Left ventricle myocardium inferior (tissue), 1 donor: ENCODE measurements at regions of chr22 and their contacts with region 1.

Region 1: DNA sequence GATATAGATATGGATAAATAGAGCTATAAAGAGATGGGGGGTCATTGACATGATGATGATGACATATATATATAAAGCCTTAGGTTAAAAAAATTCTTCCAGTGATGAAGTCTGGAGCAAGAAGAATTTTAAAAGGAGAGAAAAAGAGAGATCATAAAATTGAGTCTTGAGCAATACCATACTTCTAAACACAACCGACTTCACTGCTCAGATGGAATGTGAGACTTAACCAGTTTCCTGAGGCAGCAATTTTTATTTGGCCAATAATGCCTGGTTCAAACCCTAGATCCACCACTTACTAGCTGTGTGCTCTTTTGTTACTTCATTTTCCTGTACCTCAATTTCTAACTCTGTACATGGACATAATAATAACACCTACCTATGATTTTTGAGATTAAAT is 229.5 kb downstream of the TTC28 start:
- DNase-seq: no peak
- H3K4me3 ChIP-seq: no peak overlapping the region
- H3K27ac ChIP-seq: no peak overlapping the region
- H3K4me1 ChIP-seq: no peaks in the 10 kb centered on the region
- H3K27me3 ChIP-seq: no peaks in the 10 kb centered on the region
- CTCF ChIP-seq: no peak

Region 2: DNA sequence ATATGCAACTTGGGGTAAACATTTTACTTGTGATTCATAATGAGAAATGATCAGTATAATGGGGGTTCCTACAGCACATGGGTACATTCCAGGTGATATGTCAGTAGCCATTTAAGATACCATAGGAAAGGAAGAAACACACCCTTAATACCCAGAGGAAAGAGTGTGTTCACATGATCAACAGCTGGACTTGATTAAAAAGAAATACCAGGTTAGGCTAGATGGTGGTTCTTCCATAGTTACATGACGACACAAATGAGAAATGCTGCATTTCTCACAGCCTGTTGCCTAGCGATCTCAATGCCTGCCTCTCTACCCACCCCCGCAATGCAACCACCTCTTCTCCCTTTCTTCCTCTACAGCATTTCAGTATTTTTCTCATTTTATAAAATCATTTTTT is 132.7 kb after region 1 on chr22:
- intact Hi-C with region 1: loop called (anchors 10 kb)
- DNase-seq: no peak
- H3K4me3 ChIP-seq: no peak overlapping the region
- H3K27ac ChIP-seq: no peak overlapping the region
- H3K4me1 ChIP-seq: peaks cover 4% of the 10 kb centered on the region
- H3K27me3 ChIP-seq: no peaks in the 10 kb centered on the region
- CTCF ChIP-seq: no peak